ENCODE measurements at regions of chr10 and their contacts with region 1.

Region 1: DNA sequence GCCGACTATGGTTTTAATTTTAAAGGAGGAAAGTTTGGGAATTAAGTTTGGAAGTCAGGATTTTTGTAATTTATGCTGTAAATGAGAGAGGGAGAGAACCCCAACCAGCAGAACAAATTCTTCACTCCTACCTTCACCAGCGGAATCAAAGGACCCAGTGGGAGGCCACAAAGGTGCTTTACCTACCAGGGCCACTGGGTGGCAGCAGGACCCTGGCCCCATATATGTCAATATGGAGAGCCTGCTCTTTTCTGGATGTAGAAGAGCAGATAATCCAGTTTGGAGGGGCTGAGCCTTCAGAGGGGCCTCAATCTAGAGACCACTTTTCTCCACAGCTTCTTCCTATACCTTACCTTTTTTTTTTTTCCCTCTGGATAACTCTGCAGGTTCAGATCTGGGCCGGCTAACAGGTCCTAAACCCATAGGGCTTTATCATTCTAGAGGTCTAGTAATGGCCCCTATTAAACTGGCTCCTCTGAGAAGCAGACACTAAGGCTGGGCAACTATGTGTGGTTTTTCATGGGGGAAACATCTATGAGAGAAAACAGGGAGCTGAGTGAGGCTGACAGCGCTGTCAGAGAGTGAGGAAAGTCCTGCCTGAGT is 8.5 kb upstream of the SCD start:
- DNase-seq: peak; percentile 89

Region 2: GRCh38 chr10:99487125-99487807 is 851.3 kb before region 1 on chr10:
- intact Hi-C with region 1: no loop called
- DNase-seq: no peak

Region 3: DNA sequence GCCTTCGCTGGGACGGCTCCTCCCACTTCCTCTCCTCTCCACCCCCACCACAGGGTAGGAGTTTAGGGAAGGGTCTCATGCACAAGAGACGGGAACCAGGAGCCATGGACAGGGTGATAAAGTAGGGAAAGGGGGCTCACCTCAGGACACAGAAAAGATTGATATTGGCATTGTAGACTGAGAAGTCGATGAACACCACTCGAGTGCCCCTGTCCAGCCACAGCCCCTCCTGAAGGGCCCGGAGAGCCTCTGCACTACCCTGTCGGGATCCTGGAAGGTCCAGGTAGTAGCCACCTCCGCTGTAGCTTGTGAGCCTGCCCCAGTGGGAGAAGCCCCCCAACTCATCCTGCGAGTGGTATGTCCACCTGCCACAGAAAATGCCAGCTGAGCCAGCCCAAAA is 41.3 kb before region 1 on chr10:
- intact Hi-C with region 1: no loop called
- DNase-seq: no peak

Region 4: GRCh38 chr10:100370714-100371481 is 32.4 kb after region 1 on chr10:
- intact Hi-C with region 1: loop called in 1 of 2 experiments (anchors 2 kb)
- DNase-seq: peak; percentile 93

Region 5: GRCh38 chr10:100433253-100434240 is 95.0 kb after region 1 on chr10:
- intact Hi-C with region 1: loop called (anchors 1 to 5 kb)
- DNase-seq: peak; percentile 96

Region 6: GRCh38 chr10:100519311-100520051 is 180.9 kb after region 1 on chr10 and contains the start of gene SEC31B:
- intact Hi-C with region 1: loop called in 1 of 2 experiments (anchors 5 kb)
- DNase-seq: no peak
- total RNA-seq, gene SEC31B: 7.0 to 9.5 TPM

Measured in posterior vena cava (tissue), 2 donors.